G401 (cell line): ENCODE measurements at regions of chr17 and their contacts with region 1.

Region 1: GRCh38 chr17:40062329-40063186 is at the start of gene THRA:
- DNase-seq: peak; percentile 77
- total RNA-seq, gene THRA: 11.8 and 18.4 TPM in 2 replicates

Region 2: GRCh38 chr17:40157973-40158372 is 95.4 kb after region 1 on chr17:
- in situ Hi-C with region 1: no loop called
- DNase-seq: no peak

Region 3: DNA sequence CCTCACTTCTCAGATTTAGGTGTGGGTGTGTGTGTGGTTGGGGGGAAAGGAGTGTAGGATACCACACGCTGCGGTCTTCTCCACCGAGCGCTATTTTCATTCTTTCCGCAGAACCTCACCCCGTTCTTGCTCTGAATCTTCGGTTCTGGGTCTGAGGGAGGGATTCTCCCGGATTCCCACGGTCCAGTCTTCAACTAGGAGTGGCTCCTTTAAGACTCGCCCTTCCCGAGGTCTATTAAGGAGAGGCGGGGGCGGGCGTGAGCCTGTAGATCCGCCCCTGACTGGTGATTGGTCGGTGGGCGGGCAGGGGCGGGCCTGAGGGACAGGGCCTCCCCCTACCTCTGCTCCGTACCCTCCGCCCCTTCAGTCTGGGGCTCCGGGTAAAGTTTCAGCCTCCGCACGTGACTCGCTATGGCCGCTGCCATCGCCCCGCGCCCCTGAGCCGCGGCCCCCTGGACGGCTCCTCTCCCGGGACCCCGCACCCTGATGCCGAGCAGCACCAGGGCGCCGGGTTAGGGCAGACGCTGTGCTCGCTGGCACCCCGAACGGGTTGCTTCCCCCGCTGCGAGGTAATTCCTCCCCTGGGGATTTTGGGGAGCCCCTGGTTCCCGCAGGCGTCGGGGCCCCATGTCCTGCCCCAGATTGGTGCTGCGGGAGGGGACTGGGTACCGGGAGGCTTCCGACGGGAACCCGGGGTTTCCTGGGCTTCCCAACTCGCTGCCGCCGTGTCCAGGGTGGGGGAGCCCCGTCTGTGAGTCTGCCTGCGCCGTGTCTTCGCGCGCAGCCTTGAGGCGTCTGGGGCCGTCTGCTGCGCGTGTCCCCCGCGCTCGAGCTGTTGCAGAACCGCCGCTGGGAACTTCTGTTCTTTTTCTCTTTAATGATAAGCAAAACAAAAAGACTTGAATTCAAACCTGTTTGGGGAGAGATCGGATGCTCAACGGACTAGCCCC is 255.6 kb after region 1 on chr17:
- in situ Hi-C with region 1: loop called (anchors 25 kb)
- DNase-seq: peak; percentile 98